ENCODE measurements at regions of chr3 and their contacts with region 1.

Region 1: GRCh38 chr3:8769088-8769822 is at the start of gene OXTR:
- DNase-seq: peak; percentile 96
- H3K4me3 ChIP-seq: peak within 1 kb of the TSS; percentile 49 to 61
- H3K27ac ChIP-seq: 0 out of 4 replicates have a peak within 1 kb of the TSS, but pooled peaks of 1 of the 2 experiments have one; percentile 2
- H3K4me1 ChIP-seq: peaks cover 0 to 16% of the 10 kb centered on the region in 2 experiments; a peak in 3 of 4 replicates
- H3K27me3 ChIP-seq: no peaks in the 10 kb centered on the region
- CTCF ChIP-seq: peak; percentile 96
- EP300 ChIP-seq: no peak
- RAD21 ChIP-seq: peak; percentile 91
- polyA plus RNA-seq, gene OXTR: 1.8 and 2.5 TPM in 2 replicates

Region 2: DNA sequence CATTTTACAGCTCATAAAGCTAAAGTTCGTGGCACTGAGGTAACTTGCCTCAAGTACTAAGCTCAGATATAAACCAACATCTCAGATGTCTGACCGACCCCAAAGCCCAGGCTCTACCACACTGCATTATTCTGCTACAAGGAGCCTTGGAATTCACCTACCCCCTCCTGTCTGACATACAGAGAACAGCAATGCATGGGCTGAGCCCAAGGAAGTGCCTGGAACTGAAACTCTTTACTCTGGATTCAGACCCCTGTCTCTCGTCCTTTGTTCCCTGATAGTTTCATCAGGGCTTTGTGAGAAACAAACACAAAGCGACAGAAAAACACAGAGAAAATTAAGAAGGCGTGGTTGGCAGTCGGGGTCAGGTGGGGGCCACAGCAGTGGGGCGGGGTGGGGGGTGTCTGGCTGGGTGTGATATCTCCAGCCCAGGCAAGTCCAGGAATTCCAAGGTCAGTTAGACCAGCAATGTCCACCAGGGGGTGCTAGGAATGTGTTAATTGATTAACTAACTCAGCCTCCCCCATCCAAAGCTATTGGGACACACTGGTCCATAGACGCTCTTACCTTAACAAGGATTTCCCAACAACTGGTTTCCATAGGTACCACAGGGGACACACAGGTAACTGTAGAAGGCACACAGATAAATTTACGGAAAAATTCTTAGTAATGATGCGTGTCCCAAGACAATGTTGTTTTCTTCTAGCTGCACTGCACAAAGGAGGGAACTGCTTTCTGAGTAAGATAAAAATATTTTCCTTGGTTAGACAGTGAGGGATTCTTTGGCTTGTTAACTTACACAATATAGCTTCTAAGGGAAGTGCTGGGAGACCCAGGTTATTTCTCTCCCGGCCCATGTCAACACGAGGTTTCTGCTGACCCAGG is 105.8 kb before region 1 on chr3:
- CTCF ChIA-PET with region 1: interaction called, 35 read pairs
- POLR2A ChIA-PET with region 1: interaction called, 3 read pairs
- DNase-seq: peak; percentile 65
- H3K4me3 ChIP-seq: no peak overlapping the region; a peak in 1 of 4 replicates
- H3K27ac ChIP-seq: peak overlapping the region in 1 of 2 experiments; percentile 91; a peak in 2 of 4 replicates
- H3K4me1 ChIP-seq: peaks cover 12 to 48% of the 10 kb centered on the region in 2 experiments
- H3K27me3 ChIP-seq: no peaks in the 10 kb centered on the region
- CTCF ChIP-seq: peak; percentile 69
- EP300 ChIP-seq: no peak
- RAD21 ChIP-seq: peak; percentile 61

Region 3: GRCh38 chr3:8741581-8742261 is 27.5 kb before region 1 on chr3:
- CTCF ChIA-PET with region 1: interaction called, 23 read pairs
- POLR2A ChIA-PET with region 1: no interaction called
- DNase-seq: peak; percentile 42
- H3K4me3 ChIP-seq: peak overlapping the region in 1 of 2 experiments; percentile 13; a peak in 1 of 4 replicates
- H3K27ac ChIP-seq: peak overlapping the region in 1 of 2 experiments; percentile 67; a peak in 3 of 4 replicates
- H3K4me1 ChIP-seq: peaks cover 10 to 25% of the 10 kb centered on the region in 2 experiments
- H3K27me3 ChIP-seq: no peaks in the 10 kb centered on the region
- CTCF ChIP-seq: no peak
- EP300 ChIP-seq: peak in 1 of 2 experiments; percentile 36; a peak in 1 of 4 replicates
- RAD21 ChIP-seq: no peak

Region 4: GRCh38 chr3:8793242-8793641 is 24.0 kb after region 1 on chr3:
- CTCF ChIA-PET with region 1: interaction called, 14 read pairs
- POLR2A ChIA-PET with region 1: no interaction called
- DNase-seq: peak; percentile 74
- H3K4me3 ChIP-seq: no peak overlapping the region
- H3K27ac ChIP-seq: peak overlapping the region; percentile 27 to 93; a peak in 3 of 4 replicates
- H3K4me1 ChIP-seq: peaks cover 0 to 20% of the 10 kb centered on the region in 2 experiments; a peak in 2 of 4 replicates
- H3K27me3 ChIP-seq: no peaks in the 10 kb centered on the region
- CTCF ChIP-seq: no peak
- EP300 ChIP-seq: peak in 1 of 2 experiments; percentile 90; a peak in 2 of 4 replicates
- RAD21 ChIP-seq: no peak

Region 5: GRCh38 chr3:8911781-8912180 is 142.5 kb after region 1 on chr3:
- CTCF ChIA-PET with region 1: interaction called, 10 read pairs
- POLR2A ChIA-PET with region 1: interaction called, 3 read pairs
- DNase-seq: no peak
- H3K4me3 ChIP-seq: no peak overlapping the region
- H3K27ac ChIP-seq: no peak overlapping the region
- H3K4me1 ChIP-seq: peaks cover 0 to 6% of the 10 kb centered on the region in 2 experiments; a peak in 2 of 4 replicates
- H3K27me3 ChIP-seq: no peaks in the 10 kb centered on the region
- CTCF ChIP-seq: no peak
- EP300 ChIP-seq: no peak
- RAD21 ChIP-seq: no peak

Region 6: DNA sequence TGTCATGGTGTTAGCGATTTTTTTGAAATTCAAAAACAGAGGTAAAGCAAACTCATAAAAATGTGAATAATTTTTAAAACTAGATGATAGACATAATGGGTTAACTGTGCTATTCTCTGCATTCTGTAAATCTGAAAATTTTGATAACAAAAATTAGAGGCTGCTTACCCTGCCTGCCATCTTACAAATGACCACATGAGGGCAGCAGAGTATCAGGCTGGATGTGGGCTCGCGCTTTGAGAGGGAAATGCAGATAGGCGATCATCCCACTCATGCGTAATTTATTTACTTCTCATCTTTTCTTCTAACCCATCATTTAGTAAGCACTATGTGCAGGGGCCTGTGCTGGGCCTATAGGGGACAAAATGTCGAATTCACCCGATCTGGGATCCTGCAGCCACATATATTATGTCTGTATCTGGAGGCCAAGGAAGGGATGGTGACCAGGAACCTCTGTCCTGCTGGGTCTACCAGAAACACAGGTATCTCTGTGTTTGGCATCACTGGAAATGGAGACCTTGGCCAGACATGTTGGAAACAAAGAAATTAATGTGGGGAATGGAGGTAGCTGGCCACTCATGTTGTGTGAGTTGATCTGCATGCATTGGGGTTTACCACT is 201.8 kb after region 1 on chr3:
- CTCF ChIA-PET with region 1: interaction called, 19 read pairs
- POLR2A ChIA-PET with region 1: no interaction called
- DNase-seq: peak; percentile 69
- H3K4me3 ChIP-seq: peak overlapping the region in 1 of 2 experiments; percentile 13; a peak in 1 of 4 replicates
- H3K27ac ChIP-seq: no peak overlapping the region
- H3K4me1 ChIP-seq: peaks cover 0 to 4% of the 10 kb centered on the region in 2 experiments; a peak in 1 of 4 replicates
- H3K27me3 ChIP-seq: no peaks in the 10 kb centered on the region
- CTCF ChIP-seq: peak; percentile 98
- EP300 ChIP-seq: no peak
- RAD21 ChIP-seq: peak; percentile 97

Region 7: GRCh38 chr3:9534429-9534828 is 765.2 kb after region 1 on chr3:
- CTCF ChIA-PET with region 1: no interaction called
- POLR2A ChIA-PET with region 1: no interaction called
- DNase-seq: no peak
- H3K4me3 ChIP-seq: no peak overlapping the region
- H3K27ac ChIP-seq: no peak overlapping the region
- H3K4me1 ChIP-seq: no peaks in the 10 kb centered on the region
- H3K27me3 ChIP-seq: no peaks in the 10 kb centered on the region
- CTCF ChIP-seq: no peak
- EP300 ChIP-seq: no peak
- RAD21 ChIP-seq: no peak